A549 (cell line): ENCODE measurements at regions of chr19 and their contacts with region 1.

Region 1: DNA sequence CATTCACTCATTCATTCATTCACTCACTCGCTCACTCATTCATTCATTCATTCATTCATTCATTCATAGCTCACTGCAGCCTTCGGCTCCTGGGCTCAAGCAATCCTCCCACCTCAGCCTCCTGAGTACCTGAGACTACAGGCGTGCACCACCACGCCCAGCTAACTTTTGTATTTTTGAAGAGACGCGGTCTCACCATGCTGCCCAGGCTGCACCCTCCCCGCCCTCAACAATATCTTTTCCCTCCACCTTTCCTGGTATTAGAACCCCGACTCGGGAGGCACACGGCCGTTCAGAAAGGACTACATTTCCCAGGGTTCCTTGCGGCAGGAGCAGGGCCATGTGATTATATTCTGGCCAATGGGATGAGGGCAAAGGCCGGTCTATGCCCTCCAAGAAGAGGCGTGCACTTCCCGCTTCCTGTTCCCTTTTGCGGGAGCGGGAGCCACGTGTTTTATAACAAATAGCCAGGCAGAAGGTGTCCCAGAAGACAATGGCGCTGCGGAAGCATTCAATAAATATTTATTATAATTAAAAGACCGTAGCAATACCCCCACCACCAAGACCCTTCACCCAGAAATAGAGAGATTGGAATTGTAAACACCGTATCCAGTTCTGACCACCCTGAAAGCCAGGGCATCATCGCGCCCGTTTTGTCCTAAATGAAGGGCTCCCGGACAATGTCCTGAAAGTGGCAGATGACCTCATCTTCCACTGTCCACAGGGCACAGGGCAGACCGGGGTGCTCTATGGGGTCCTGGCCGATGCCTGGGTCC is 15.9 kb downstream of the TICAM1 start:
- DNase-seq: peak; percentile 91 to 93
- ATAC-seq: peak; percentile 59 to 77; a peak in 4 of 6 replicates
- H3K4me3 ChIP-seq: no peak overlapping the region
- H3K27ac ChIP-seq: peak overlapping the region; percentile 77 to 89
- H3K4me1 ChIP-seq: peaks cover 17% of the 10 kb centered on the region
- CTCF ChIP-seq: no peak
- EP300 ChIP-seq: no peak
- POLR2A ChIP-seq: no peak
- RAD21 ChIP-seq: no peak

Region 2: GRCh38 chr19:4328243-4328990 is 487.2 kb before region 1 on chr19:
- CTCF ChIA-PET with region 1: no interaction called
- POLR2A ChIA-PET with region 1: no interaction called
- DNase-seq: peak in 1 of 2 experiments; percentile 36
- ATAC-seq: peak; percentile 59 to 78; a peak in 5 of 6 replicates
- H3K4me3 ChIP-seq: no peak overlapping the region
- H3K27ac ChIP-seq: no peak overlapping the region
- H3K4me1 ChIP-seq: no peaks in the 10 kb centered on the region
- CTCF ChIP-seq: no peak
- EP300 ChIP-seq: no peak
- POLR2A ChIP-seq: no peak
- RAD21 ChIP-seq: no peak

Region 3: DNA sequence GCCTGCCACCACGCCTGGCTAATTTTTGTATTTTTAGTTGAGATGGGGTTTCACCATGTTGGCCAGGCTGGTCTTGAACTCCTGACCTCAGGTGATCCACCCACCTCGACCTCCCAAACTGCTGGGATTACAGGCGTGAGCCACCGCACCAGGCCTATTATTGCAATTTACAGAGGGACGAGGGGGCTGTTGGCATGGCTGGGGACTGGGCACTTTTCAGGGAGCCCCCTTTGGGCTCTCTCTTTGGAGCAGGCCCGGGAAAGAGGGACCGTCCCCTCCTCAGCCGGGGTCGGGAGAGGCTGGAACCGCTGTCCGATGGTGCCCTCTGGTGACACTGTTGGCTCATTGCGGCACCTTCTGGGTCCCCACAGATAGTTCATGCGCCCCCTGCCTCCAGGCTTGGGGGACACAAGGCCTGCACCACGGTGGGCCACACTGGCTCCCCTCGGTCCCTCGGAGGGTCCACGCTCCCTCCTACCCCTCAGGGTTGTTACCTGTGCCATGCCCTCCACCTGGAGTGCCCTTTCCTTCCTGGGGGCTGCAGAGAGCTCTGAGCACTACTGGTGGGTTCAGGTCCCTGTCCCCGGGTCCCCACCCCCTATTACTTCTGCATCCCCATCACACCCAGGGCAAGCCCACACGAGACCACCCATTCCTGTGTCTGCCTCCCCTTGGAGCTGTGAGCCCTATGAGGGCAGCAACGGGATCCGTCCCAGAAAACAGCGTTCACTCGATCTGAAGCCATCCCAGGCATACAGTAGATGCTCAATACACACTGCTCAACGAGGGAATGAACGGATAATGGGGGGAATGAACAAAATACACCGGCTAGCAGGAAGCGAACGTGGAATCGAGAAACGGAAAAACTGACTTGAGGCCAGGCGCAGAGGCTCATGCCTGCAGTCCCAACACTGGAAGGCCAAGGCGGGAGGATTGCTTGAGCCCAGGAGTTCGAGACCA is 11.6 kb before region 1 on chr19:
- CTCF ChIA-PET with region 1: interaction called, 27 read pairs
- POLR2A ChIA-PET with region 1: no interaction called
- DNase-seq: peak; percentile 47 to 52
- ATAC-seq: peak; percentile 88 to 93
- H3K4me3 ChIP-seq: no peak overlapping the region
- H3K27ac ChIP-seq: no peak overlapping the region
- H3K4me1 ChIP-seq: no peaks in the 10 kb centered on the region
- CTCF ChIP-seq: peak; percentile 67
- EP300 ChIP-seq: no peak
- POLR2A ChIP-seq: no peak
- RAD21 ChIP-seq: peak; percentile 69 to 80

Region 4: GRCh38 chr19:4851551-4852290 is 36.1 kb after region 1 on chr19:
- CTCF ChIA-PET with region 1: interaction called, 240 read pairs
- POLR2A ChIA-PET with region 1: no interaction called
- DNase-seq: peak; percentile 52 to 63
- ATAC-seq: peak; percentile 93 to 97
- H3K4me3 ChIP-seq: no peak overlapping the region
- H3K27ac ChIP-seq: no peak overlapping the region
- H3K4me1 ChIP-seq: no peaks in the 10 kb centered on the region
- CTCF ChIP-seq: peak; percentile 54
- EP300 ChIP-seq: no peak
- POLR2A ChIP-seq: no peak
- RAD21 ChIP-seq: peak; percentile 64 to 65

Region 5: GRCh38 chr19:4878491-4878968 is 62.9 kb after region 1 on chr19:
- CTCF ChIA-PET with region 1: interaction called, 18 read pairs
- POLR2A ChIA-PET with region 1: no interaction called
- DNase-seq: no peak
- ATAC-seq: no peak
- H3K4me3 ChIP-seq: no peak overlapping the region
- H3K27ac ChIP-seq: no peak overlapping the region
- H3K4me1 ChIP-seq: no peaks in the 10 kb centered on the region
- CTCF ChIP-seq: no peak
- EP300 ChIP-seq: no peak
- POLR2A ChIP-seq: no peak
- RAD21 ChIP-seq: no peak

Region 6: DNA sequence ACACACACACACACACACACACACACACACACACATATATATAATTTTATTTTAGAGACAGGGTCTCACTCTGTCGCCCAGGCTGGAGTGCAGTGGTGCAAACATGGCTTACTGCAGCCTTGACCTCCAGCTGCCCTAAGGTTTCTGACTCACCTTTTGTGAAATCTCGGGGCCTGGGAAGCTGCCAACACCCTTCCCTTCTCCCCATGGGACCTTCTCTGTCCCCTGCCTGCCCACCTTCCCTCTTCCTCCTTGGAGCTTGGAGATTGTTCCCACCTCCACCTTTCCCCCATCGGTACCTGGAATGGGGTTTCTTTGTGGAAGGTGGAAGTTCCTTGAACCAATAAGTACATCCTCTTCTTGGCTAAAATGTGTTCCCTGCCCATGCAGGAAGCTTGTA is 80.8 kb after region 1 on chr19:
- CTCF ChIA-PET with region 1: no interaction called
- POLR2A ChIA-PET with region 1: no interaction called
- DNase-seq: peak in 1 of 2 experiments; percentile 33
- ATAC-seq: no peak
- H3K4me3 ChIP-seq: no peak overlapping the region
- H3K27ac ChIP-seq: peak overlapping the region in 1 of 2 experiments; percentile 60; a peak in 3 of 6 replicates
- H3K4me1 ChIP-seq: peaks cover 10% of the 10 kb centered on the region; the same call in 2 of the 3 replicates
- CTCF ChIP-seq: no peak
- EP300 ChIP-seq: no peak
- POLR2A ChIP-seq: no peak
- RAD21 ChIP-seq: no peak

Region 7: DNA sequence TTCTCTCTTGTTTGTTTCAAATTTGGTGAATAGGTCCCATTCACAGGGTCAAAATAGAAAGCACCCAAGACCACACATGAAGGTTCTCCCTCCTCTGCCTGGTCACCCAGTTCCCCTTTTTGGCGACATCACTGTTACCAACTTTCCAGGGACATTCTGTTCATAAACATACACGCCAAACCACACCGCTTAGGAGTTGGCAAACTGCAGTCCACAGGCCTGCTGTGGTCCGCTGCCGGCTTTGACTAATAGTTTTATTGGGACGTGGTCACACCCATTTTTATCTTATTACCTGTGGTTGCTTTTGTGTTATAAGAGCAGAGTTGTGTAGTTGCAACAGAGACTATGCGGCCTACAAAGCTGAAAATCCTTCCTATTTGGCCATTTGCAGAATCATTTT is 117.9 kb after region 1 on chr19:
- CTCF ChIA-PET with region 1: no interaction called
- POLR2A ChIA-PET with region 1: no interaction called
- DNase-seq: no peak
- ATAC-seq: no peak
- H3K4me3 ChIP-seq: no peak overlapping the region
- H3K27ac ChIP-seq: no peak overlapping the region
- H3K4me1 ChIP-seq: no peaks in the 10 kb centered on the region
- CTCF ChIP-seq: no peak
- EP300 ChIP-seq: no peak
- POLR2A ChIP-seq: no peak
- RAD21 ChIP-seq: no peak

Region 8: DNA sequence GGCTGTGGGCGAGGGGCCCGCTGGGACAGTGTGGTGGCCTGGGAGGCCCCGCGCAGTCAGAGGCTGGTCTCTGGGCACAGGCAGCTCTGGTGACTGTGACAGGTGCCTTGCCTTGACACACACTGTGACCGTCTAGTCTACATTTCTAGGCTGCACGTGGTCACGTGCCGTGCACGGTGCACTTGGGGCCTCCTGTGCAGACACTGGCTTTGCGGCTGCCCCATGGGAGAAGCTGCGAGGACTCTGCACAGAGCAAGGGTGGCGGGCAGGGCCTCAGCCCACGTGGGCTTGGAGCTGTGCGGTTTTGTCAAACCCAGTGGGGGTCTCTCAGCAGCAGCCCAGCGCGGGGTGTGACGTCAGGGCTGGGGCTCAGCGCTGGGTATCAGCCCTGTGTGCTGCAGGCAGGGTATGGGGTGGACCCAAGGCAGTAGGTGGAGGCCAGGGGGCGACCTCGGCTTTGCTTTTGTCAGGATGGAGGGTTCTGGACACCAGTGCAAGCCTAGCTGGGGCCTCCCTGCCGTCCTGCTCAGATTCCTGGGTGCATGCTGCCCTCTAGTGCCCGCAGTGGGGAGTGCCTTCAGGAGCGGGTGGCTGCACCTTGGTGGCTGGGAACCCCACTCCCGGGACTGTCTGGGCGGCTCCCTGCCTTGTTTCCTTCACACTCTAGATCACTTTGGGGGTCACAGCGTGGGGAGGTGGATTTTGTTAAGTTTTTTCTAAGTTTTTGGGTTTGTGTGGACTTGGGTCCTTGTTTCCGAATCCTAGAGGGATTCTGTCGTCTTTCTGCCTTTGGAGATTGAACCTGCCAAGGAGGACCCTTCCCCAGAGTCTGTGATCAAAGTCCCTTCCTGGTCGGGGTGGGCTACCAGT is 215.9 kb after region 1 on chr19:
- CTCF ChIA-PET with region 1: interaction called, 143 read pairs
- POLR2A ChIA-PET with region 1: no interaction called
- DNase-seq: peak; percentile 63 to 81
- ATAC-seq: peak; percentile 92 to 95
- H3K4me3 ChIP-seq: no peak overlapping the region
- H3K27ac ChIP-seq: no peak overlapping the region
- H3K4me1 ChIP-seq: 0 out of 3 replicates have a peak, but pooled peaks cover 5% of the 10 kb centered on the region
- CTCF ChIP-seq: peak; percentile 72
- EP300 ChIP-seq: no peak
- POLR2A ChIP-seq: no peak
- RAD21 ChIP-seq: peak; percentile 89 to 91